ENCODE measurements at regions of chrX and their contacts with region 1.

Region 1: GRCh38 chrX:129759576-129760061 is 20.1 kb upstream of the SASH3 start:
- DNase-seq: peak; percentile 75
- H3K4me3 Mint-ChIP-seq: peak overlapping the region; percentile 16
- H3K27ac Mint-ChIP-seq: peak overlapping the region; percentile 94
- H3K4me1 Mint-ChIP-seq: peaks cover 68% of the 10 kb centered on the region
- H3K27me3 Mint-ChIP-seq: no peaks in the 10 kb centered on the region

Region 2: DNA sequence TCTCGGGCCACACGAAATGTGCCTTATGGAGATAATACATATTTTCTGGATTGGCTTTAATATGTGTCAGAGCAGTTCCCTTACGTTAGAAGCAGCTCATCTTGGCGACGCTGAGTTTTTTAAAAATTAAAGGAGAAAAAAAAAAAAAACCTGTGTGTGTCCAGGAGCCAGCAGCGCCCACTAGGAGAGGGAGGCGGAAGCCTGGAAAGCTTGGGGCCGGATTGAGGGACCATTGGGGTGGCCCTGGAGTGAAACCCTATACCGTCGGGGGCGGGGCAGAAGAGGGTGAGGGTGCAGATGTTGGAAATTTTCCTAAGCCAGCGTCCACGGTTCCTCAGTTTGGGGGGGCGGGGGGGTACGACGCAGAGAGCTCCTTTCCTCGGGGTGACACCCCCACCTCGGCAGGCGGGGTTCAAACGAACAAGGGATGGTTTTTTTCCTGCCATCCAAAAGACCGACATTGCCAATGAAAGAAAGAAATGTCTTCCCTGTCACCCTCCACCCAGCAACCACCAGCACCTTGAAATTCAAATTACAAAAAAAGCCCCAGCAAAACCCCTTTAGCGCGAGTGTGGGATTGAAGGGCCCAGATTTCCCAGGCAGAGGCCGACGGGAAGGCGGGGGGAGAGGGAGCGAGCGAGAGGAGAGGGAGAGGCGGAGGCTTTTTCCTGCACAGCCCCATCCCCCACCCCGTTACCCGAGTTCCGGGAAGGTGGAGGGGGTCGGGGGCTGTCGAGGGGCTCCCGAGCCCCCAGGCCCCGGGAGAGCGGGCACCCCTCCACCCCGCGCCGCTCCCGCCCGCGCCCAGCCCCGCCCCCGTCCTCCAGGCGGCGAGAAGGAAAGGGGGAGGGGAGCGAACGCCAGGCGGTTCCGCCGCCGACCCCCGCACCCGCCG is 237.2 kb before region 1 on chrX:
- CTCF ChIA-PET with region 1: no interaction called
- POLR2A ChIA-PET with region 1: no interaction called
- DNase-seq: no peak
- H3K4me3 Mint-ChIP-seq: peak overlapping the region; percentile 57
- H3K27ac Mint-ChIP-seq: no peak overlapping the region
- H3K4me1 Mint-ChIP-seq: peaks cover 5% of the 10 kb centered on the region
- H3K27me3 Mint-ChIP-seq: peaks cover 30% of the 10 kb centered on the region

Region 3: GRCh38 chrX:129593137-129593536 is 166.5 kb before region 1 on chrX:
- CTCF ChIA-PET with region 1: no interaction called
- POLR2A ChIA-PET with region 1: no interaction called
- DNase-seq: no peak
- H3K4me3 Mint-ChIP-seq: no peak overlapping the region
- H3K27ac Mint-ChIP-seq: peak overlapping the region; percentile 35
- H3K4me1 Mint-ChIP-seq: peaks cover 10% of the 10 kb centered on the region
- H3K27me3 Mint-ChIP-seq: no peaks in the 10 kb centered on the region

Region 4: DNA sequence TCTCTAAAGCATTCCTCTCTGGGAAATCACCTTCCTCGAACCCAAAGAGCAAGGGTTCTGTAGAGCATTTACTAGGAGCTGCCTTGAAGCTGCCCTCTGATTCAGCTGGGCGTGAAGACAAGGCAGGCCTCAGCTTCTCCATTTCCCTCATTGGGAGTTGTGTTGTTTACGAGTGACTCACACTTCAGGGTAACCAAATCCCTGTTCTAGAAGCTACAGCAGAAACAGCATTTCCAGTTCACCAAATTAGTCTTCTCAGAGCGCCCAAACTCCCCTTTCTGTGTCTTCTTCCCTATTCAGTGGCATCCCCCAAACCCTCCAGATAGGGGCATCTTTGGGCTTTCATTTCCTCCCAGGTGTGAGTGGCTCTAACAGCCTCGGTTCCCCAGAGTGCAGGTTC is 21.7 kb before region 1 on chrX:
- CTCF ChIA-PET with region 1: interaction called, 14 read pairs
- POLR2A ChIA-PET with region 1: interaction called, 45 read pairs
- DNase-seq: no peak
- H3K4me3 Mint-ChIP-seq: no peak overlapping the region
- H3K27ac Mint-ChIP-seq: peak overlapping the region; percentile 54
- H3K4me1 Mint-ChIP-seq: peaks cover 45% of the 10 kb centered on the region
- H3K27me3 Mint-ChIP-seq: no peaks in the 10 kb centered on the region

Region 5: DNA sequence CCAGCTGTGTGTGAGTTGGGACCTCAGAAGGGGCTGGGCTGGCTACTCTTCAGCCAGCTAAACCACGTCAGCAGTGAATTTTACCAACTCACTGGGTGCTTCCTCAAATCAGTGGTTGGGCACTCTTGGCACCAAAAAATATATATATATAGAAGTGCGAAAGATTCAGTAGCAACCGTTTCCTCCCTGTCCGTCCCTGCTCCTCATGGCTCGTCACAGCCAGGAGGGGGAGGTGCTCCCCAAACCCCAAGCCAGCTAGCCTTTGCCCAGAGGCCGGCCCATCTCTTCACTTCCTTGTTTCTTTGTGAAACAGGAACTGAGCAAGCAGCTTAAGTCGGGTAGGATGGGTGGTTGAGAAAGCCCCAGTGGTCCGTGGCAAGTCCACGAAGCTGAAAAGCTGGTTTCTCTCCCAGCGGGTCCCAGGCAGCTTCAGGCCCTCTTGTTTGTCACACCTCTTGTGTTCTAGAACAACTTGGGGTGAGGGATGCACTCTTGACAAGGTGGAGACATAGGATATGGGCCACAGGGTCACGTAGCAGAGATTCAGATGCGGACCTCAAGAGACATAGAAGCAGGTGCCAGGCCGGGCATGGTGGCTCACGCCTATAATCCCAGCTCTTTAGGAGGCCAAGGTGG is 13.3 kb after region 1 on chrX:
- CTCF ChIA-PET with region 1: interaction called, 31 read pairs
- POLR2A ChIA-PET with region 1: interaction called, 354 read pairs
- DNase-seq: peak; percentile 58
- H3K4me3 Mint-ChIP-seq: peak overlapping the region; percentile 58
- H3K27ac Mint-ChIP-seq: peak overlapping the region; percentile 95
- H3K4me1 Mint-ChIP-seq: peaks cover 86% of the 10 kb centered on the region
- H3K27me3 Mint-ChIP-seq: no peaks in the 10 kb centered on the region

Region 6: GRCh38 chrX:129781134-129781672 is 21.6 kb after region 1 on chrX:
- CTCF ChIA-PET with region 1: interaction called, 38 read pairs
- POLR2A ChIA-PET with region 1: interaction called, 354 read pairs
- DNase-seq: peak; percentile 89
- H3K4me3 Mint-ChIP-seq: peak overlapping the region; percentile 81
- H3K27ac Mint-ChIP-seq: peak overlapping the region; percentile 92
- H3K4me1 Mint-ChIP-seq: peaks cover 62% of the 10 kb centered on the region
- H3K27me3 Mint-ChIP-seq: no peaks in the 10 kb centered on the region

Region 7: DNA sequence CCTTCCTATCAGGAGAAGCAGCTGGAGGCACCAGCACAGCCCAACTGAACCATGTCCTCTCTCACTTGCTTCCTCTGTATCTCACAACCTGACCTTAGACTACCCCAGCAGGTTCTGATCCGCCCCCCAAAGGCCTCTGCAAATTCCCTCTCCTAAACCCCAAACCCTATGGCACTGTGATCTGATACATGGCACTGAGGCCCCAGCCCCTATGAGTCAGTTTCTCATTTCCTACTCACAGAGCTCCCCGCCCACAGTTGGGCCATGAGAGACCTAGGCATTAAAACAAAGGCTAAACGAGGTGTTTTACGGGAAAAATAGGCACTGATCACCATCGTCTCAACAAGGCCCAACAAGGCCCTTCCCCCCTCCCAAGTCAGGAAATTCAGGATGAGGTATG is 39.3 kb after region 1 on chrX:
- CTCF ChIA-PET with region 1: interaction called, 3 read pairs
- POLR2A ChIA-PET with region 1: interaction called, 16 read pairs
- DNase-seq: no peak
- H3K4me3 Mint-ChIP-seq: no peak overlapping the region
- H3K27ac Mint-ChIP-seq: peak overlapping the region; percentile 66
- H3K4me1 Mint-ChIP-seq: peaks cover 34% of the 10 kb centered on the region
- H3K27me3 Mint-ChIP-seq: no peaks in the 10 kb centered on the region